ENCODE measurements at regions of chr5 and their contacts with region 1.

Region 1: GRCh38 chr5:317086-317811 is 4.3 kb upstream of the AHRR start:
- DNase-seq: peak; percentile 82
- ATAC-seq: peak; percentile 80
- H3K4me3 Mint-ChIP-seq: no peak overlapping the region
- H3K27ac Mint-ChIP-seq: no peak overlapping the region
- H3K4me1 Mint-ChIP-seq: peaks cover 6% of the 10 kb centered on the region
- H3K27me3 Mint-ChIP-seq: peaks cover 34% of the 10 kb centered on the region
- CTCF ChIP-seq: peak; percentile 48; the same call in 1 of the 2 replicates

Region 2: DNA sequence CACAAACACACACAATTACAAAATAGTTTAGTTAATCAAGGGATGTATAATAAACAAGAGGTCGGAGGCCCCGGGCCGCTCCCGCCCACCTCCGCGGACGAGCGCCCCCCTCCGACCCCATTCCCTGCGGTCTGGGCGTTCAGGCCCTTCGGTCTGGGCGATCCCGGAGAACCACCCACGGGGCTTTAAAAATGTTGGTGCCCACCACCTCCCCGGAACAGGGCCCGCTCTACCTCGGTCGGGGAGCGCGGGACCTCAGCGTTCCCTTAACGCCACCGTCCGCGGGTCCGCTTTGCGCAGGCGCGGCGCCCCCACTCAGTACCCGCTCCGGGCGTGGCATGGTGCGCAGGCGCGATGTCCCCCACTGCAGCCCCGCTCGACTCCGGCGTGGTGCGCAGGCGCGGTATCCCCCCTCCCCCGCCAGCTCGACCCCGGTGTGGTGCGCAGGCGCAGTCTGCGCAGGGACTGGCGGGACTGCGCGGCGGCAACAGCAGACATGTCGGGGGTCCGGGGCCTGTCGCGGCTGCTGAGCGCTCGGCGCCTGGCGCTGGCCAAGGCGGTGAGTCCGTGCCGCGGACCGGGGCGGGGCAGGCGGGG is 99.3 kb before region 1 on chr5 and contains the starts of genes CCDC127 and SDHA:
- CTCF ChIA-PET with region 1: interaction called, 12 read pairs
- POLR2A ChIA-PET with region 1: no interaction called
- DNase-seq: peak; percentile 97
- ATAC-seq: peak; percentile 86
- H3K4me3 Mint-ChIP-seq: peak within 1 kb of the TSS; percentile 93
- H3K27ac Mint-ChIP-seq: peak within 1 kb of the TSS; percentile 94
- H3K4me1 Mint-ChIP-seq: peaks cover 36% of the 10 kb centered on the region
- H3K27me3 Mint-ChIP-seq: no peaks in the 10 kb centered on the region
- CTCF ChIP-seq: no peak
- total RNA-seq, gene CCDC127: 5.3 to 8.4 TPM (median 6.3 TPM) in 3 replicates
- total RNA-seq, gene SDHA: 135 to 145 TPM (median 137 TPM) in 3 replicates

Region 3: GRCh38 chr5:231661-232060 is 85.6 kb before region 1 on chr5:
- CTCF ChIA-PET with region 1: no interaction called
- POLR2A ChIA-PET with region 1: no interaction called
- DNase-seq: no peak
- ATAC-seq: no peak
- H3K4me3 Mint-ChIP-seq: no peak overlapping the region
- H3K27ac Mint-ChIP-seq: no peak overlapping the region
- H3K4me1 Mint-ChIP-seq: peaks cover 10% of the 10 kb centered on the region
- H3K27me3 Mint-ChIP-seq: no peaks in the 10 kb centered on the region
- CTCF ChIP-seq: no peak

Region 4: DNA sequence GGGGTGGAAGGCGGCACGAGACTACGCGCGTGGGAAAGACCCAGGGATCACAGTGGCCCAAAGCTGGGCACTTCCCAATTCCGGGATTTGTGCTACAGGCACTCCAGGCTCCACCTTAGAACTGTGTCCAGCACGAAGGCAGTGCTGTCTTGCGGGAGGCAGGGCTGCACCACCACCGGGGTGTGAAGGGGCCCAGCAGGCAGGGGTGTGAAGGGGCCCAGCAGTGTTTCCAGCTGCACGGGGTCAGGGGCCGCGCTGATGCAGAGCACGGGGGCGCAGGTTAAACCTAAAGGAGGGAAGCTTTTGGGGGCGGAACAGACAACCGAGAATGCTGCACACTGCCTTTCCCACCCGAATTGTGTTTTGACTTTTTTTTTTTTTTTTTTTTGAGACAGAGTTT is 46.9 kb before region 1 on chr5:
- CTCF ChIA-PET with region 1: interaction called, 12 read pairs
- POLR2A ChIA-PET with region 1: interaction called, 3 read pairs
- DNase-seq: no peak
- ATAC-seq: no peak
- H3K4me3 Mint-ChIP-seq: peak overlapping the region; percentile 85
- H3K27ac Mint-ChIP-seq: peak overlapping the region; percentile 78; the same call in 1 of the 2 replicates
- H3K4me1 Mint-ChIP-seq: peaks cover 24% of the 10 kb centered on the region
- H3K27me3 Mint-ChIP-seq: peaks cover 3% of the 10 kb centered on the region
- CTCF ChIP-seq: no peak

Region 5: GRCh38 chr5:337563-338130 is 20.4 kb after region 1 on chr5:
- CTCF ChIA-PET with region 1: interaction called, 17 read pairs
- POLR2A ChIA-PET with region 1: no interaction called
- DNase-seq: no peak
- ATAC-seq: peak; percentile 97
- H3K4me3 Mint-ChIP-seq: no peak overlapping the region
- H3K27ac Mint-ChIP-seq: no peak overlapping the region
- H3K4me1 Mint-ChIP-seq: 0 out of 2 replicates have a peak, but pooled peaks cover 4% of the 10 kb centered on the region
- H3K27me3 Mint-ChIP-seq: peaks cover 11% of the 10 kb centered on the region
- CTCF ChIP-seq: no peak

Region 6: GRCh38 chr5:418681-419121 is 101.5 kb after region 1 on chr5:
- CTCF ChIA-PET with region 1: interaction called, 11 read pairs
- POLR2A ChIA-PET with region 1: no interaction called
- DNase-seq: peak; percentile 17
- ATAC-seq: no peak
- H3K4me3 Mint-ChIP-seq: no peak overlapping the region
- H3K27ac Mint-ChIP-seq: no peak overlapping the region
- H3K4me1 Mint-ChIP-seq: peaks cover 18% of the 10 kb centered on the region
- H3K27me3 Mint-ChIP-seq: no peaks in the 10 kb centered on the region; the same call in 1 of the 2 replicates
- CTCF ChIP-seq: no peak

Region 7: GRCh38 chr5:446864-447263 is 129.6 kb after region 1 on chr5:
- CTCF ChIA-PET with region 1: interaction called, 27 read pairs
- POLR2A ChIA-PET with region 1: no interaction called
- DNase-seq: peak; percentile 13
- ATAC-seq: peak; percentile 26; the same call in 1 of the 2 replicates
- H3K4me3 Mint-ChIP-seq: no peak overlapping the region
- H3K27ac Mint-ChIP-seq: no peak overlapping the region
- H3K4me1 Mint-ChIP-seq: peaks cover 14% of the 10 kb centered on the region
- H3K27me3 Mint-ChIP-seq: peaks cover under 1% of the 10 kb centered on the region
- CTCF ChIP-seq: peak; percentile 41; the same call in 1 of the 2 replicates

Region 8: GRCh38 chr5:776792-777711 is 459.8 kb after region 1 on chr5:
- CTCF ChIA-PET with region 1: no interaction called
- POLR2A ChIA-PET with region 1: no interaction called
- DNase-seq: no peak
- ATAC-seq: no peak
- H3K4me3 Mint-ChIP-seq: no peak overlapping the region
- H3K27ac Mint-ChIP-seq: peak overlapping the region; percentile 1; the same call in 1 of the 2 replicates
- H3K4me1 Mint-ChIP-seq: no peaks in the 10 kb centered on the region
- H3K27me3 Mint-ChIP-seq: peaks cover 4% of the 10 kb centered on the region
- CTCF ChIP-seq: no peak